Activated CD4-positive, alpha-beta T cell treated with anti-CD3 and anti-CD28 coated beads, Interleukin-2, amount 10 ng/mL, durations not matched to agents 24 days and 14 days (primary cell): ENCODE measurements at regions of chr9 and their contacts with region 1.

Region 1: DNA sequence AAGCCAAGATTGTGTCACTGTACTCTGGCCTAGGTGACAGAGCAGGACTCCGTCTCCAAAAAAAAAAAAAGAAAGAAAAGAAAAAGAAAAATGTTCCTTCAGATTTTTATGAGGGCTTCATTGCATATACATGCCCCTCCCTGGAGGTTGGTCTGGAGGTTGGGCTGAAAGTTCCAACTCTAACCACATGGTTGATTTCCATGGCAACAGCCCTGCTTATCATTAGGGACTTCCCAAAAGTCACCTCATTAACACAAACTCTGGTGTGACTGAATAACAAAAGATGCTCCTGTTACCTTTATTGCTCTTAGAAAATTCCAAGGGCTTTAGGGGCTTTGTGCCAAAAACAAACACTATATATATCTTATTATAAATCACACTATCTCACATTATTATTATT is 113.8 kb downstream of the TMC1 start:
- DNase-seq: peak; percentile 72
- H3K4me3 Mint-ChIP-seq: no peak overlapping the region
- H3K27ac Mint-ChIP-seq: no peak overlapping the region
- H3K4me1 Mint-ChIP-seq: peaks cover 9% of the 10 kb centered on the region
- H3K27me3 Mint-ChIP-seq: peaks cover 6% of the 10 kb centered on the region

Region 2: GRCh38 chr9:71795097-71795813 is 839.9 kb before region 1 on chr9:
- intact Hi-C with region 1: no loop called
- DNase-seq: peak; percentile 76
- H3K4me3 Mint-ChIP-seq: peak overlapping the region; percentile 74
- H3K27ac Mint-ChIP-seq: peak overlapping the region; percentile 85
- H3K4me1 Mint-ChIP-seq: peaks cover 32% of the 10 kb centered on the region
- H3K27me3 Mint-ChIP-seq: no peaks in the 10 kb centered on the region

Region 3: DNA sequence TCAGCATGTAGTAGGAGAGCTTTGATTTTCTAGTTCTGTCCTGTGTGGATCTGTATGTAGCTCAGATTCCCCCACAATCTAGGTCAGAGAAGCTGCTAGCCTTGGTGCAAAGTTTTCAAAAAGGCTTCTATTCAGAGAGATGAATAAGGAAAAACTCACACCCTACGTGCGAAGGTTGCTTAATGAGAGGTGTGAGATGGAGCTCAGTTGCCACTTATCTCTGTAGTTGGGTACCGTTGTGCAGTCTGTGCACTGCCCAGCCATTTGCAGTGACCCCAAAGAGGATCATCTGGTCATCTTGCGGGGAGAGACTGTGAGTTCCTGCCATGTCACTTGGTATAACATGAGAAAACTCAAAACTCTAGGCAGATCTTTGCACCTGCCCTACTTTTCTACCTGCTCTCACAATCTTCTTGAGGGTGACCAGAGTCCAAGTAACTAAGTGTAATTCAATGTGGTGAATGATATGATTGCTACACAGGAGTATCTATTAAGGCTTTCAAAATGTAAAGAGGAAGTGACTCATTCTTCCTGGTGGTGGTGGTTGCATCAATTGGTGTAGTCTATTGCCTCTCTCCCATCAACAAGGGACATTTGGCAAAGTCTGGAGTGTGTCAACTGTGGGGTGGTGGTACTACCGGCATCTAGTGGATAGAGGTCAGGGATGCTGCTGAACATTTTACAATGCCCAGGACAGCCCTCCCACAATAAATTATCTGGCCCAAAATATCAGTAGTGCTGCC is 48.6 kb before region 1 on chr9:
- intact Hi-C with region 1: no loop called
- DNase-seq: peak; percentile 69
- H3K4me3 Mint-ChIP-seq: peak overlapping the region; percentile 3
- H3K27ac Mint-ChIP-seq: peak overlapping the region; percentile 48
- H3K4me1 Mint-ChIP-seq: peaks cover 47% of the 10 kb centered on the region
- H3K27me3 Mint-ChIP-seq: no peaks in the 10 kb centered on the region

Region 4: GRCh38 chr9:72623156-72623555 is 12.0 kb before region 1 on chr9:
- intact Hi-C with region 1: loop called (anchors 1 kb)
- DNase-seq: peak; percentile 4
- H3K4me3 Mint-ChIP-seq: no peak overlapping the region
- H3K27ac Mint-ChIP-seq: no peak overlapping the region
- H3K4me1 Mint-ChIP-seq: no peaks in the 10 kb centered on the region
- H3K27me3 Mint-ChIP-seq: peaks cover 15% of the 10 kb centered on the region

Region 5: DNA sequence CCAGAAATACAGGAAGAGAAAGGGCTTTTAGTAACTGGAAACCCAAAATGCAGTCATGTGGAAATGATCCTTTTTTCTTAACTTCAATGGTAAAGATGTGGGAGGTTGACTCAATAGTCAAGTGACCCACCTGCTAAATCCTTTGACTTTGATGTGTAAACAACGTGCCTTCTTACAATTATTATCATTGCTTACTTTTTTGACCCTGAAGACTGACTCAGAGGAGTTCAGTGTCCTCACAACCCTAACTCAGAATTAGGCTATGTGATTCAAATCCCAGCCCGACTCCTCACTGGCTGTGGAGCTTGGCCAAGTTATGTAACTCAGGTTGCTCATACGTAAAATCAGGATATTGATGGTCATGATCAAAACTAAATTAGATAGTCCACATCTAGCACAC is 544.4 kb after region 1 on chr9:
- intact Hi-C with region 1: no loop called
- DNase-seq: peak; percentile 52
- H3K4me3 Mint-ChIP-seq: no peak overlapping the region
- H3K27ac Mint-ChIP-seq: no peak overlapping the region
- H3K4me1 Mint-ChIP-seq: peaks cover 6% of the 10 kb centered on the region
- H3K27me3 Mint-ChIP-seq: no peaks in the 10 kb centered on the region